Activated T-helper 2 cell treated with anti-CD3 and anti-CD28 coated beads, Interferon-gamma antibody, Interleukin-2, Interleukin-4, amounts not matched to agents 10 μg/mL and 5 μg/mL and 100 μg/mL, durations not matched to agents 14 hours and 24 hours and 36 hours (primary cell): ENCODE measurements at regions of chr10 and their contacts with region 1.

Region 1: DNA sequence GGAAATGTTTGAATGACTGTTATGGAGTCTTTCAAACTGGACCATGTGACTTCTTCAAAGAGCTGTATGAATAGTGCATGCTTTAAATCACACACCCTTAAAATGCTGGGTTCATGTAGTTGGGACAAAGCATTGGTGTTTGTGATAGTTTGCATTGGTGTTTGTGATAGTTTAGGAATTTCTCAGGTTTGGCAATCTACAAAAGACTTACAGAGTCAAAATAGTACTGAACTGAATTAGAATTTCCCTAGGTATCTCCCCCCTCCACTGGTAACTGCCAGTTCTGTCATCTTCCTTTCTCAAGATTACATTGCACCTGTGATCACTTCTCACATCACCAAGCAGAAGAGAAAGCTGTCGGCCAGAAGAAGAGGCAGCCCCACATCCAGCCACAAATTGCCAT is 261.1 kb downstream of the GATA3 start:
- DNase-seq: no peak
- H3K4me3 Mint-ChIP-seq: no peak overlapping the region
- H3K27ac Mint-ChIP-seq: peak overlapping the region; percentile 70
- H3K4me1 Mint-ChIP-seq: peaks cover 64% of the 10 kb centered on the region
- H3K27me3 Mint-ChIP-seq: no peaks in the 10 kb centered on the region

Region 2: DNA sequence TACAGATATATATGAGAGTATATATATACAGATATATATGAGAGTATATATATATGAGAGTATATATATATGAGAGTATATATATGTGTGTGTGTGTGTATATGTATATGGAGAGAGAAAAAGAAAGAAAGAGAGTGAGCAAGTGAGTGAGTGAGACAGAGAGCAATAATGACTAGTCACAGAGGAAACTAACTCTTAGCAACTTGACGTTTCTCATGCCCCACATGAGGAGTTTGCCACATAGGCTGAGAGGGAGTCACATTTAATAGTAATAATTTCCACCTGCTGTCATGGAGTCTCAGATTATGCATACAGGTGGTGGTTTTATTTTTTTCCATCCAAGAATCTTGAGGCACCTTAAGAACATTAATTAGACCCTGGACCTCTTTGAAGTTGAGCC is 61.3 kb before region 1 on chr10:
- intact Hi-C with region 1: loop called (anchors 1 kb)
- DNase-seq: no peak
- H3K4me3 Mint-ChIP-seq: peak overlapping the region; percentile 18
- H3K27ac Mint-ChIP-seq: peak overlapping the region; percentile 84
- H3K4me1 Mint-ChIP-seq: peaks cover 42% of the 10 kb centered on the region
- H3K27me3 Mint-ChIP-seq: no peaks in the 10 kb centered on the region

Region 3: DNA sequence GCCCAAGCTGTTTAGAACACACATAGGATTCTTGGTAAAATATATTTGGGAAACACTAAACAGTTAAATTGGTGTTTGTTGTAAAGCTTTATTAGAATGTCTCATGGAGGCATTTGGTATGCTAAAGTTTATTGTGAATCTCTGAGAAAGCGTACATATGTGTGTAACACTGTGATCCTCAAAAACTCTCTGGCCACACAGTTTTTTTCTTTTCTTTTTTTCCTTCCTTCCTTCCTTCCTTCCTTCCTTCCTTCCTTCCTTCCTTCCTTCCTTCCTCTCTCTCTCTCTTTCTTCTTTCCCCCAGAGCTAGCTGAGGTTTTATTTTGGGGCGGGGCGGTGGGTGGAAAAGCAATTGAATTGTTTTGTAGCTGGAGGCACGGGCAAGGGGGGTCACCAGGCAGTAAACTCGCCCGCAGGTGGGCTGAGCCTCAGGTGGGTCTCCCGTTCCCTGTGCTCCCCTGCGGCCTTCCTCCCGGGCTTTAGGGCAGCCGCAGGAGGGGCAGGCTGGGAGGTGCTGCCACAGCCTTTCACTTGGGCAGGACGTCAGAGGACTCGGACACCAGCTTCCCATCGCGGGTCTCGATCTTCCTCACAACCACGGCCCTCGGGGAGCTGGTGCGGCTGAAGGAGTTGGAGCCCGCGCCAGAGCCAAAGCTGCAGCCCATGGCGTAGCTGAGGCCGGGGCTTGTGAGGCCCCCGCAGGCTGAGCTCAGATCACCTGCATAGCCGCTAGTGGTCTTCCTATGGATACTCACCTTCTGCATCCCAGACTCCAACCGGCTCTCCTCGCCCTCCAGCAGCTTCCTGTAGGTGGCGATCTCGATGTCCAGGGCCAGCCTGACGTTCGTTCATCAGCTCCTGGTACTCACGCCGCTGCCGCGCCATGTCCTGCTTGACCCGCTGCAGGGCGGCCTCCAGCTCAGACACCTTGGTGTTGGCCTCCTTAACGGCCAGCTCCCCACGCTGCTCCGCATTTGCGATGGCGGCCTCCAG is 197.8 kb after region 1 on chr10:
- intact Hi-C with region 1: no loop called
- DNase-seq: no peak
- H3K4me3 Mint-ChIP-seq: no peak overlapping the region
- H3K27ac Mint-ChIP-seq: no peak overlapping the region
- H3K4me1 Mint-ChIP-seq: peaks cover 2% of the 10 kb centered on the region
- H3K27me3 Mint-ChIP-seq: peaks cover 2% of the 10 kb centered on the region